Prostate gland (tissue), 2 donors: ENCODE measurements at regions of chr7 and their contacts with region 1.

Region 1: DNA sequence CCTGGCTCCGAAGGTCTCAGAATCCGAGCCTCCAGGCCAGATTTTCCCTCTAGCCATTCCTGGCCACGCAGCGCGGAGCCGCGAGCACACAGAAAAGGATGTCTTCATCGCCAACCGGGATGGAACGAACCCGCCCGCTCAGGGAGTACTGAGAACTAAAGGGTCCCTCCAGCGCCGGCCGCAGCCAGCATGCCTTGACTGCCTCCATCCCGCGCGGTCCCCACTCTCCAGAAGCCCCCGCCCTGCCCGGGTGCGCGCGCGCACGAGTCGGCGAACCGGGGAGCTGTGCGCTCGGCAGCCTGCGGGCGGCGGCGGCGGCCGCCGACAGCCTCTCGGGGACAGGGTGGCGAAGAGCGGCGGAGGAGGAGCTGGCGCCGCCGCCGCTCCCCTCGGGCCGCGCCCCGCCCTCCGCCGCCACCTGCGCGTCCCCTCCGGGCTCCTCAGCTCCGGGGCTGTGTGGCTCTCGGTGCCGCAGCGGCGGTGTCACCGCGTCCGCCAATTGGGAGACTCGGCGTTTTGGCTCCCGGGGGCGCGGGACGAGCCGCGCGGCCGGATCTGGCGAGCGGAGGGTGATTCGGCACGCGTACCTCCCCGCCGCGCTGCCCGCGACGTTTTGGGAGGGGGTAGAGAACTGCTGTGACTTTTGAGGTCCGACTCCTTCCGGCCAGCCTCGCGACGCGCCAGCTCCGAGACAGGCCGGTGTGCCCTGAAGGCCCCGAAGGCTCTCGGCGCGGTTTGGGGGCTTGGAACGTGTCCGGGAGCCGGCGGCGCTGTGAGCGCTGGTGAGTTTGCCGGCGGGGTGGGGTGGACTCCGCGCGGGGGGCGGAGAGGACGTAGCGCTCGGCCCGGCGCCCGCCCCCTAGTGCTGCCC is 453 bp upstream of the GALNT17 start:
- DNase-seq: peak; percentile 54
- H3K4me3 ChIP-seq: peak overlapping the region; percentile 64 to 67
- H3K27ac ChIP-seq: peak overlapping the region; percentile 87 to 88
- H3K4me1 ChIP-seq: no peaks in the 10 kb centered on the region
- H3K27me3 ChIP-seq: no peaks in the 10 kb centered on the region
- CTCF ChIP-seq: peak in 3 of 4 experiments; percentile 19 to 54 (median 25)
- POLR2A ChIP-seq: no peak

Region 2: DNA sequence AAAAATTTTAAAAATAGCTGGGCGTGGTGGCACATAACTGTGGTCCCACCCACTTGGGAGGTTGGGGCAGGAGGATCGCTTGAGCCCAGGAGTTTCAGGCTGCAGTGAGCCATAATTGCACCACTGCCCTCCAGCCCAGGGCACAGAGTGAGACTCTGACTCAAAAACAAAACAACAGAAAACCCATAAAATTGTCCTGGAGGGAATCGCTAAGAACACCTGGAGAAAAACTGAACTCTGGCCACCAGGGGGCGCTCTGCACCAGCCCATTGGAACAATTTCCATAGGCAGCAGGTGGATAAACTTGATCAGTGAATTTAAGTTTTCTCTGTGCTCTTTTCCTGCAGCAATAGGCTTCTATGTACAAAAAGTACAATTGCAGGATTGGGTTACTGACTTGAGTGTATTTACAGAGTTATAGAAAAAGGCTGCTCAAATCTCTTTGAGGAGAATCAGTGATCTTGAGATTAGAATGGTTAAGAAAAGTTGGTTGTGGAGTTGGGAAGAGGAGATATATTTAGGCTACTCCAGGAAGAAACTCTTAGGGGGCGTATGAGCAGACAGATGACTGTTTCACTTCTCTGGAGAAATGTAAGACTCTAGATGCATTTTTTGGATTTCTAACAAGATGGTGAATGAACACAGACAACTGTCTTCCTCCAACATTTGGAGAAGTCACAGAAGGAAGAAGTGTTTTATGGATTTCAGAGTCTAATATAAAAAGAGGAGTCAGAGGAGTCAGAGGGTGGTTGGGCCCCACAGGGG is 274.4 kb before region 1 on chr7:
- intact Hi-C with region 1: loop called (anchors 5 kb)
- DNase-seq: peak; percentile 74
- H3K4me3 ChIP-seq: no peak overlapping the region
- H3K27ac ChIP-seq: no peak overlapping the region
- H3K4me1 ChIP-seq: no peaks in the 10 kb centered on the region
- H3K27me3 ChIP-seq: no peaks in the 10 kb centered on the region
- CTCF ChIP-seq: peak; percentile 81 to 100 (median 90)
- POLR2A ChIP-seq: no peak

Region 3: GRCh38 chr7:71186535-71187057 is 55.1 kb after region 1 on chr7:
- intact Hi-C with region 1: loop called (anchors 5 kb)
- DNase-seq: no peak
- H3K4me3 ChIP-seq: no peak overlapping the region
- H3K27ac ChIP-seq: peak overlapping the region; percentile 55 to 68
- H3K4me1 ChIP-seq: peaks cover 5% of the 10 kb centered on the region
- H3K27me3 ChIP-seq: no peaks in the 10 kb centered on the region
- CTCF ChIP-seq: no peak
- POLR2A ChIP-seq: no peak

Region 4: DNA sequence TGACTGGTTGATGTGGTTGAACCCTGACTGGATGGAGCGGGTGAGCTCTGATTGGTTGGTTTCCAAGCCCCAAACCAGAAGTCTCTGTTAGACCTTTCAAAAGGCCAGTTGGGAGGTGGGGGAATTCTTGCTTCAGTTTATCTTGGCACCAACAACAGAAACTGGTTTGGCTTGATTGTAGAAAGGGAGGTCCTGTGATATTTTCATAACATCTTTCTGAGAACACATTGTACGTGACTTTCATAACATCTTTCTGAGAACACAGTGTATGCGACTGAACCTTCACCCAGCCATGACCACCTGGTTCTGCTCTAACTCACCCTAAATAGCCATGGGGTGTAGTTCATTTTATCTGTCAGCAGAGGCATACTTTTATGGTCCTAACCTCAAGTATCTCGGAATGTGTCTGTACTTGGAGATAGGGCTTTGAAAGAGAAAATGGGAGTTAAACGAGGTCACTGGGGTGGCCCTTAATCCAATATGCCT is 88.8 kb after region 1 on chr7:
- intact Hi-C with region 1: loop called (anchors 5 kb)
- DNase-seq: peak; percentile 64
- H3K4me3 ChIP-seq: no peak overlapping the region
- H3K27ac ChIP-seq: peak overlapping the region; percentile 86 to 93
- H3K4me1 ChIP-seq: no peaks in the 10 kb centered on the region
- H3K27me3 ChIP-seq: no peaks in the 10 kb centered on the region
- CTCF ChIP-seq: peak in 1 of 4 experiments; percentile 46
- POLR2A ChIP-seq: no peak

Region 5: DNA sequence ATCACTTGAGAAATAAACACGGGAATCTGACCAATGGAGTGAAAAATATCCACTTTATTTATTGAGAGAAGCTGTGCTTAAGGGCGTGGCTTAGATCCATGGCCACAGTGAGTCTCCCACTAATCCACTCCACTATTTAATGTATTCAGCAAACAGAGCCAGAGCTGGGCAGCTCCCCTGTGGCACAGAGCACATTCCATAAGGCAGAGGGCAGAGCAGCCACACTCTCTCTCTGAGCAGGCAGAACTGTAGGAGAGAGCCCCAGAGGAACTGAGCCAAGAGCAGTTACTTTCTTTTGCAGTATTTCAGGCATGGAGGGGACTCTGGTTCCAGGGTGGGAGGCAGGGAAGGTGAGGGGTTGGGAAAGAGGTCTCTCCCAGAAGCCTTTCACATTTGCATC is 106.5 kb after region 1 on chr7:
- intact Hi-C with region 1: loop called (anchors 2 kb)
- DNase-seq: peak; percentile 48
- H3K4me3 ChIP-seq: no peak overlapping the region
- H3K27ac ChIP-seq: peak overlapping the region; percentile 60 to 77
- H3K4me1 ChIP-seq: peaks cover 3% of the 10 kb centered on the region
- H3K27me3 ChIP-seq: no peaks in the 10 kb centered on the region
- CTCF ChIP-seq: peak in 1 of 4 experiments; percentile 47
- POLR2A ChIP-seq: no peak

Region 6: DNA sequence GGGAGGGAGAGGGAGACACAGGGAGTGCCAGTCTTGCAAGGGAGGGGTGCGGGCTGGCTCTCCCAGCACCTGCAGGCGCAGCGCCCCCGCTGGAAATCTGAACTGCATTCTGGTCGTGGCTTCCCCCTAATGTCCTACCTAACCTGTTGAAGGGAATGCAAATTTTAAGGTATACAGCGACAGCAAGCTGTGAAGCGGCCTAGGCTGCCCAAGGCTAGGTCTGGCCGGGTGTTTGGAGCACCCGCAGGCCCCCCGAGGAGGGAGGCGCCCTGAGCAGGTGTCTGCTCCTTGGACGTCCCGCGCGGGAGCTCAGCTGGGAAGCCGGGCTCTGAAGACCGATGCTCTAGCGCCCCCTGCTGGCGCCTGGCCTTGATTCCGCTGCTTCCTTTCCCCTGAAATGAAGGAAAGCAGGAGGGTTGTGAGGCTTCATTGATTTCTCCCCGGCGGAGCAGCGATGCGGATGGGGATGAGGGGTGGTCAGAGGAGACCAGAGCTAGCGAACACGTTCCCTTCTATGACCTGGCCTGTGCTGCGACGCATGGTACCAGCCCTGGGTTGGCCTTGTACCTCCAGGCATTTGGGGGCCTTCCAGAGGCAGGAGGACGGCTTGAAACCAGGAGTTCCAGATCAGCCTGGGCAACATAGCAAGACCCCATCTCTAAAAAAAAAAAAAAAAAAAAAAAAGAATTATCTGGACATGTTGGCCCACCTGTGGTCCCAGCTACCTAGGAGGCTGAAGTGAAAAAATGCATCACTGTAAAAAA is 601.8 kb after region 1 on chr7:
- intact Hi-C with region 1: loop called (anchors 5 kb)
- DNase-seq: peak; percentile 82
- H3K4me3 ChIP-seq: peak overlapping the region in 1 of 2 donors; percentile 23
- H3K27ac ChIP-seq: no peak overlapping the region
- H3K4me1 ChIP-seq: no peaks in the 10 kb centered on the region
- H3K27me3 ChIP-seq: no peaks in the 10 kb centered on the region
- CTCF ChIP-seq: peak; percentile 84 to 92 (median 90)
- POLR2A ChIP-seq: no peak